Activated CD4-positive, alpha-beta T cell treated with anti-CD3 and anti-CD28 coated beads for 36 hours (primary cell): ENCODE measurements at regions of chr2 and their contacts with region 1.

Region 1: GRCh38 chr2:162318328-162319180 is at the start of gene IFIH1:
- DNase-seq: peak; percentile 87
- ATAC-seq: peak; percentile 93
- H3K4me3 Mint-ChIP-seq: peak within 1 kb of the TSS; percentile 85
- H3K27ac Mint-ChIP-seq: peak within 1 kb of the TSS; percentile 98
- H3K4me1 Mint-ChIP-seq: peaks cover 54% of the 10 kb centered on the region
- H3K27me3 Mint-ChIP-seq: no peaks in the 10 kb centered on the region
- total RNA-seq, gene IFIH1: 36.8 to 42.3 TPM

Region 2: GRCh38 chr2:161238560-161239325 is 1079.8 kb before region 1 on chr2:
- CTCF ChIA-PET with region 1: no interaction called
- POLR2A ChIA-PET with region 1: no interaction called
- intact Hi-C with region 1: loop called in 1 of 2 experiments (anchors 5 kb)
- DNase-seq: peak; percentile 79
- ATAC-seq: peak; percentile 55
- H3K4me3 Mint-ChIP-seq: peak overlapping the region; percentile 76
- H3K27ac Mint-ChIP-seq: peak overlapping the region; percentile 81
- H3K4me1 Mint-ChIP-seq: peaks cover 54% of the 10 kb centered on the region
- H3K27me3 Mint-ChIP-seq: no peaks in the 10 kb centered on the region

Region 3: GRCh38 chr2:162013514-162014475 is 304.8 kb before region 1 on chr2:
- CTCF ChIA-PET with region 1: no interaction called
- POLR2A ChIA-PET with region 1: no interaction called
- intact Hi-C with region 1: loop called in 1 of 2 experiments (anchors 5 kb)
- DNase-seq: no peak
- ATAC-seq: peak; percentile 27
- H3K4me3 Mint-ChIP-seq: peak overlapping the region; percentile 47
- H3K27ac Mint-ChIP-seq: peak overlapping the region; percentile 95
- H3K4me1 Mint-ChIP-seq: peaks cover 56% of the 10 kb centered on the region
- H3K27me3 Mint-ChIP-seq: no peaks in the 10 kb centered on the region

Region 4: GRCh38 chr2:162221064-162221463 is 97.5 kb before region 1 on chr2:
- CTCF ChIA-PET with region 1: interaction called, 12 read pairs
- POLR2A ChIA-PET with region 1: no interaction called
- intact Hi-C with region 1: no loop called
- DNase-seq: peak; percentile 75
- ATAC-seq: peak; percentile 57
- H3K4me3 Mint-ChIP-seq: no peak overlapping the region
- H3K27ac Mint-ChIP-seq: no peak overlapping the region
- H3K4me1 Mint-ChIP-seq: no peaks in the 10 kb centered on the region
- H3K27me3 Mint-ChIP-seq: peaks cover 16% of the 10 kb centered on the region

Region 5: DNA sequence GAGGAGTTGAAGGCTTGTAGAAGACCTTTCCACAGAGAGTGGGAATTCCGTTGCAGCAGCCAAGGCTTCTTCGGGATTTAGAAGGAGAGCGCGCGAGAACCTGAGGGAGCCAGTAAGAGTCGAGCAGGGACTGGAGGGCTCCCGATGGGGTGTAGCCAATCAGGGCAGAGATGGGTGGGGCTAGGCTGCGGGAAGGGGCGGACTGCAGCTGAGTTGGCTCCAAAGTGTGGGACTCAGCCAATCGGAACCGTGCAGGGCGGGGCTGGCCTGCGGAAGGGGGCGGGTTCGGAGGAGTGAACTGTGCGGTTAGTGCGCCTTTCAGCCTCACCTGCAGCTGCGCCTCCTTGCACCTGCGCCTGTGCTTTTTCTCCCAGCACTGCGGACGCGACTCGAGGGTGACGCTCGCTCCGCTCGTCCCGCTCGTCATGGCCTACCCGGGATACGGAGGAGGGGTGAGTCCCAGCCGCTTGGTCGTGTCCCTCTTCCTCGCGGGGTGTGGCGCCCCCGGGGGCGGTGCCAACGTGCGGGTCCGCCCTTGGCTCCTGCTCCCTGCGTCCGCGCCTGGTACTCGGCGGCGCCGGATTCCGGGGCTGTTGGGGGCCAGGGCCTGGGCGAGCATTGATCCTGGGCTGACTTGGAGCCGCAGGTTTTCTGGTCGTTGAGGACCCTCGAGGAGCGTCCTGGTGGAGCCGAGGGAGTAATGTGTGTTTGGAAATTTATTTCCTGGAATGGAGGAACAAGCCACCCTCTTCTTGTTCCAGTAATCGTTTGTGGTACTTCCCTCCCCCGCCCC is 25.5 kb after region 1 on chr2 and contains the start of gene GCA:
- CTCF ChIA-PET with region 1: interaction called, 7 read pairs
- POLR2A ChIA-PET with region 1: interaction called, 4 read pairs
- intact Hi-C with region 1: loop called (anchors 1 kb)
- DNase-seq: peak; percentile 99
- ATAC-seq: peak; percentile 99
- H3K4me3 Mint-ChIP-seq: peak within 1 kb of the TSS; percentile 86
- H3K27ac Mint-ChIP-seq: peak within 1 kb of the TSS; percentile 66
- H3K4me1 Mint-ChIP-seq: peaks cover 8% of the 10 kb centered on the region
- H3K27me3 Mint-ChIP-seq: no peaks in the 10 kb centered on the region
- total RNA-seq, gene GCA: 16.2 to 25.5 TPM